Heart right ventricle (tissue), 16 donors: ENCODE measurements at regions of chr7 and their contacts with region 1.

Region 1: GRCh38 chr7:36291387-36292316 is 98.0 kb upstream of the ANLN start:
- DNase-seq: peak; percentile 87 to 88
- ATAC-seq: peak; percentile 92 to 96 (median 94)
- H3K4me3 ChIP-seq: peak overlapping the region; percentile 12 to 49 (median 47)
- H3K27ac ChIP-seq: peak overlapping the region; percentile 21 to 92 (median 80)
- H3K4me1 ChIP-seq: peaks cover 0 to 52% (median 28%) of the 10 kb centered on the region in 9 donors
- H3K27me3 ChIP-seq: no peaks in the 10 kb centered on the region
- CTCF ChIP-seq: peak; percentile 96 to 99 (median 98)

Region 2: GRCh38 chr7:35985126-35985754 is 306.4 kb before region 1 on chr7:
- intact Hi-C with region 1: loop called (anchors 1 to 5 kb)
- DNase-seq: peak; percentile 79 to 85
- ATAC-seq: peak; percentile 91 to 98 (median 96)
- H3K4me3 ChIP-seq: no peak overlapping the region
- H3K27ac ChIP-seq: no peak overlapping the region
- H3K4me1 ChIP-seq: peaks cover 0 to 8% (median 0%) of the 10 kb centered on the region in 9 donors
- H3K27me3 ChIP-seq: no peaks in the 10 kb centered on the region
- CTCF ChIP-seq: peak; percentile 78 to 95 (median 92)

Region 3: GRCh38 chr7:36037121-36037662 is 254.5 kb before region 1 on chr7:
- intact Hi-C with region 1: loop called in 1 of 10 experiments (anchors 5 kb)
- DNase-seq: peak; percentile 52 to 82
- ATAC-seq: peak; percentile 62 to 93 (median 85)
- H3K4me3 ChIP-seq: peak overlapping the region in 1 of 10 donors; percentile 1
- H3K27ac ChIP-seq: peak overlapping the region; percentile 48 to 91 (median 83)
- H3K4me1 ChIP-seq: peaks cover 6 to 65% (median 44%) of the 10 kb centered on the region in 9 donors
- H3K27me3 ChIP-seq: no peaks in the 10 kb centered on the region
- CTCF ChIP-seq: peak in 2 of 9 donors; percentile 12

Region 4: GRCh38 chr7:36152756-36153570 is 138.7 kb before region 1 on chr7 and contains the start of gene EEPD1:
- intact Hi-C with region 1: loop called in 7 of 10 experiments (anchors 2 to 10 kb)
- DNase-seq: peak; percentile 100
- ATAC-seq: peak; percentile 96 to 98 (median 97)
- H3K4me3 ChIP-seq: peak within 1 kb of the TSS; percentile 62 to 95 (median 92)
- H3K27ac ChIP-seq: peak within 1 kb of the TSS; percentile 62 to 94 (median 89)
- H3K4me1 ChIP-seq: peaks cover 8 to 54% (median 50%) of the 10 kb centered on the region in 9 donors
- H3K27me3 ChIP-seq: no peaks in the 10 kb centered on the region
- CTCF ChIP-seq: no peak
- total RNA-seq, gene EEPD1: 6.1 to 14.7 (median 8.4) TPM

Region 5: GRCh38 chr7:36214608-36215456 is 76.8 kb before region 1 on chr7:
- intact Hi-C with region 1: loop called in 1 of 10 experiments (anchors 5 kb)
- DNase-seq: no peak
- ATAC-seq: peak in 1 of 8 donors; percentile 59
- H3K4me3 ChIP-seq: no peak overlapping the region
- H3K27ac ChIP-seq: no peak overlapping the region
- H3K4me1 ChIP-seq: peaks cover 0 to 40% (median 32%) of the 10 kb centered on the region in 9 donors
- H3K27me3 ChIP-seq: no peaks in the 10 kb centered on the region
- CTCF ChIP-seq: no peak